ENCODE measurements at regions of chr7 and their contacts with region 1.

Region 1: DNA sequence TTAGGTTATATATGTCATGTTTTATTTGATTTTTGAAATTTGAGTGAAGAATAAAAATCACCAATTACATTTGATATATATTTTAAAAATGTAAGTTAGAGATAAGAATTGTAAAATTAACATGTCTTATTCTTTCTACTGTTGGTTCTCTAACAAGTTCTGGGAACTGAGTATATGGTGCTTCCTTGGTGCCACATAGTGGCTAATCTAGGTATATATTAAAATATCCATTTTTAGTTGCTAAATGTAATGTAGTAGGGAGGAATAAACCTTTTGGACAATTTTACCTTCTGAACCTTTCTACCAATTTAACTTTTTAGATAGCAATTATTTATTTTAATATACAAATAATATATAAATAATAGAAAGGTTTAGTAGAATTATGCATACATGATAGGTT is 17.5 kb downstream of the CFAP69 start:
- DNase-seq: no peak
- ATAC-seq: peak; percentile 74
- H3K4me3 ChIP-seq: no peak overlapping the region
- H3K27ac ChIP-seq: no peak overlapping the region
- H3K4me1 ChIP-seq: peaks cover 16% of the 10 kb centered on the region
- H3K27me3 ChIP-seq: no peaks in the 10 kb centered on the region
- CTCF ChIP-seq: peak; percentile 51
- EP300 ChIP-seq: no peak
- POLR2A ChIP-seq: no peak
- RAD21 ChIP-seq: no peak

Region 2: GRCh38 chr7:90119178-90119971 is 143.1 kb before region 1 on chr7:
- CTCF ChIA-PET with region 1: no interaction called
- POLR2A ChIA-PET with region 1: no interaction called
- in situ Hi-C with region 1: no loop called
- intact Hi-C with region 1: no loop called
- DNase-seq: no peak
- ATAC-seq: peak; percentile 31; the same call in 2 of the 3 replicates
- H3K4me3 ChIP-seq: no peak overlapping the region; a peak in 1 of 6 replicates
- H3K27ac ChIP-seq: no peak overlapping the region
- H3K4me1 ChIP-seq: no peaks in the 10 kb centered on the region
- H3K27me3 ChIP-seq: peaks cover 0 to 6% of the 10 kb centered on the region in 2 experiments; a peak in 1 of 5 replicates
- CTCF ChIP-seq: no peak
- EP300 ChIP-seq: no peak
- POLR2A ChIP-seq: no peak
- RAD21 ChIP-seq: no peak

Region 3: GRCh38 chr7:90346336-90347125 is 84.1 kb after region 1 on chr7 and contains the start of gene GTPBP10:
- CTCF ChIA-PET with region 1: no interaction called
- POLR2A ChIA-PET with region 1: no interaction called
- in situ Hi-C with region 1: no loop called
- intact Hi-C with region 1: loop called (anchors 5 kb)
- DNase-seq: peak; percentile 87
- ATAC-seq: peak; percentile 91
- H3K4me3 ChIP-seq: peak within 1 kb of the TSS; percentile 82 to 97 (median 89)
- H3K27ac ChIP-seq: peak within 1 kb of the TSS; percentile 97
- H3K4me1 ChIP-seq: peaks cover 33% of the 10 kb centered on the region
- H3K27me3 ChIP-seq: no peaks in the 10 kb centered on the region; a peak in 1 of 5 replicates
- CTCF ChIP-seq: peak; percentile 87
- EP300 ChIP-seq: 0 out of 4 replicates have a peak, but pooled peaks of 1 of the 2 experiments have one; percentile 8
- POLR2A ChIP-seq: peak; percentile 97 to 98
- RAD21 ChIP-seq: peak; percentile 43
- total RNA-seq, gene GTPBP10: 38.7 and 54.6 TPM in 2 replicates

Region 4: GRCh38 chr7:90403174-90404113 is 141.0 kb after region 1 on chr7 and contains the start of gene CLDN12:
- CTCF ChIA-PET with region 1: no interaction called
- POLR2A ChIA-PET with region 1: no interaction called
- in situ Hi-C with region 1: no loop called
- intact Hi-C with region 1: loop called (anchors 10 kb)
- DNase-seq: peak; percentile 88
- ATAC-seq: peak; percentile 97
- H3K4me3 ChIP-seq: peak within 1 kb of the TSS; percentile 67 to 78 (median 68)
- H3K27ac ChIP-seq: peak within 1 kb of the TSS; percentile 83
- H3K4me1 ChIP-seq: peaks cover 43% of the 10 kb centered on the region
- H3K27me3 ChIP-seq: no peaks in the 10 kb centered on the region; a peak in 1 of 5 replicates
- CTCF ChIP-seq: 0 out of 2 replicates have a peak, but pooled peaks have one; percentile 2
- EP300 ChIP-seq: no peak; a peak in 1 of 4 replicates
- POLR2A ChIP-seq: peak; percentile 85
- RAD21 ChIP-seq: no peak
- total RNA-seq, gene CLDN12: 32.0 and 44.1 TPM in 2 replicates

Region 5: DNA sequence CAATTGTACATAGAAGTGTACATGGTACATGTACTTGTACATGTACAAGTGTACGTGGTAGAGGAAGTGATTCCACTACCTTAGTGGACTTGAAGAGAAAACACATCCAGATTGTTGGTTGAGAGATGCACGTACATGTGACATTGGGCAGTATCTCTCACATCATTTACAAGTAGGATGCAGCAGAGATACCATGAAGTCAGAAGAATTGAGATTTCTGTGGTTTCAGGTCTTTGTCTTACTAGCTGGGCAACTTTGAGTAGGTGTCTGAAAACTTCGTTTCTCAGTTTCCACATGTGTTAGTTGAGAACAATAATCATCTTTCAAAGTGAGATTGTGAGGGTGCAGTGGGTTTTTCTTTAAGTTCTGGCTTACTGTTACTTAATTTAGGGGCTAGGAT is 162.3 kb after region 1 on chr7:
- CTCF ChIA-PET with region 1: no interaction called
- POLR2A ChIA-PET with region 1: no interaction called
- in situ Hi-C with region 1: no loop called
- intact Hi-C with region 1: loop called (anchors 5 kb)
- DNase-seq: no peak
- ATAC-seq: no peak
- H3K4me3 ChIP-seq: no peak overlapping the region
- H3K27ac ChIP-seq: no peak overlapping the region
- H3K4me1 ChIP-seq: no peaks in the 10 kb centered on the region
- H3K27me3 ChIP-seq: no peaks in the 10 kb centered on the region
- CTCF ChIP-seq: no peak
- EP300 ChIP-seq: no peak
- POLR2A ChIP-seq: no peak
- RAD21 ChIP-seq: no peak